ENCODE measurements at regions of chr1 and their contacts with region 1.

Region 1: GRCh38 chr1:184672013-184672726 is 82.5 kb downstream of the EDEM3 start:
- DNase-seq: no peak
- H3K4me3 ChIP-seq: peak overlapping the region in 1 of 4 experiments; percentile 8; a peak in 1 of 8 replicates
- H3K27ac ChIP-seq: 0 out of 2 replicates have a peak overlapping the region, but pooled peaks have one; percentile 15
- H3K4me1 ChIP-seq: peaks cover 5 to 27% (median 19%) of the 10 kb centered on the region in 4 experiments; a peak in 6 of 7 replicates
- H3K27me3 ChIP-seq: no peaks in the 10 kb centered on the region
- CTCF ChIP-seq: no peak
- EP300 ChIP-seq: no peak
- POLR2A ChIP-seq: no peak
- RAD21 ChIP-seq: no peak

Region 2: GRCh38 chr1:184691719-184692324 is 19.7 kb after region 1 on chr1:
- CTCF ChIA-PET with region 1: interaction called, 20 read pairs
- POLR2A ChIA-PET with region 1: no interaction called
- DNase-seq: no peak
- H3K4me3 ChIP-seq: no peak overlapping the region
- H3K27ac ChIP-seq: no peak overlapping the region
- H3K4me1 ChIP-seq: peaks cover 0 to 4% (median 0%) of the 10 kb centered on the region in 4 experiments; a peak in 1 of 7 replicates
- H3K27me3 ChIP-seq: no peaks in the 10 kb centered on the region
- CTCF ChIP-seq: peak in 2 of 3 experiments; percentile 67 to 75; a peak in 3 of 4 replicates
- EP300 ChIP-seq: no peak
- POLR2A ChIP-seq: no peak
- RAD21 ChIP-seq: peak; percentile 88 to 92

Measured in H1 (cell line).